ENCODE measurements at regions of chr2 and their contacts with region 1.

Region 1: GRCh38 chr2:237943395-237944094 is 23.3 kb upstream of the UBE2F start:
- DNase-seq: no peak
- H3K4me3 ChIP-seq: no peak overlapping the region
- H3K4me3 Mint-ChIP-seq: peak overlapping the region in 5 of 8 donors; percentile 20 to 82 (median 73)
- H3K27ac ChIP-seq: no peak overlapping the region
- H3K27ac Mint-ChIP-seq: peak overlapping the region in 6 of 7 donors; percentile 41 to 96 (median 91)
- H3K4me1 ChIP-seq: peaks cover 74% of the 10 kb centered on the region
- H3K4me1 Mint-ChIP-seq: peaks cover 51 to 85% (median 69%) of the 10 kb centered on the region in 4 donors
- H3K27me3 ChIP-seq: no peaks in the 10 kb centered on the region
- H3K27me3 Mint-ChIP-seq: no peaks in the 10 kb centered on the region

Region 2: GRCh38 chr2:237911363-237912017 is 32.1 kb before region 1 on chr2:
- CTCF ChIA-PET with region 1: no interaction called
- POLR2A ChIA-PET with region 1: no interaction called
- intact Hi-C with region 1: no loop called
- DNase-seq: no peak
- H3K4me3 ChIP-seq: no peak overlapping the region
- H3K4me3 Mint-ChIP-seq: no peak overlapping the region
- H3K27ac ChIP-seq: no peak overlapping the region
- H3K27ac Mint-ChIP-seq: no peak overlapping the region
- H3K4me1 ChIP-seq: no peaks in the 10 kb centered on the region
- H3K4me1 Mint-ChIP-seq: peaks cover 0 to 5% (median 3%) of the 10 kb centered on the region in 4 donors
- H3K27me3 ChIP-seq: no peaks in the 10 kb centered on the region
- H3K27me3 Mint-ChIP-seq: no peaks in the 10 kb centered on the region

Region 3: GRCh38 chr2:237923481-237924163 is 19.9 kb before region 1 on chr2:
- CTCF ChIA-PET with region 1: interaction called, 14 read pairs
- POLR2A ChIA-PET with region 1: interaction called, 8 read pairs
- intact Hi-C with region 1: no loop called
- DNase-seq: peak; percentile 63 to 77 (median 75)
- H3K4me3 ChIP-seq: peak overlapping the region in 1 of 2 donors; percentile 35
- H3K4me3 Mint-ChIP-seq: peak overlapping the region; percentile 57 to 83 (median 66)
- H3K27ac ChIP-seq: no peak overlapping the region
- H3K27ac Mint-ChIP-seq: peak overlapping the region in 4 of 7 donors; percentile 7 to 65 (median 58)
- H3K4me1 ChIP-seq: peaks cover 16% of the 10 kb centered on the region
- H3K4me1 Mint-ChIP-seq: peaks cover 17 to 30% (median 22%) of the 10 kb centered on the region in 4 donors
- H3K27me3 ChIP-seq: no peaks in the 10 kb centered on the region
- H3K27me3 Mint-ChIP-seq: no peaks in the 10 kb centered on the region

Region 4: GRCh38 chr2:237955640-237956401 is 12.3 kb after region 1 on chr2:
- CTCF ChIA-PET with region 1: interaction called, 3 read pairs
- POLR2A ChIA-PET with region 1: interaction called, 3 read pairs
- intact Hi-C with region 1: loop called (anchors 2 kb)
- DNase-seq: no peak
- H3K4me3 ChIP-seq: no peak overlapping the region
- H3K4me3 Mint-ChIP-seq: no peak overlapping the region
- H3K27ac ChIP-seq: no peak overlapping the region
- H3K27ac Mint-ChIP-seq: no peak overlapping the region
- H3K4me1 ChIP-seq: no peaks in the 10 kb centered on the region
- H3K4me1 Mint-ChIP-seq: peaks cover 9 to 24% (median 13%) of the 10 kb centered on the region in 4 donors
- H3K27me3 ChIP-seq: no peaks in the 10 kb centered on the region
- H3K27me3 Mint-ChIP-seq: peaks cover 4 to 8% of the 10 kb centered on the region in 2 donors

Region 5: GRCh38 chr2:238117191-238118154 is 173.9 kb after region 1 on chr2:
- CTCF ChIA-PET with region 1: no interaction called
- POLR2A ChIA-PET with region 1: no interaction called
- intact Hi-C with region 1: no loop called
- DNase-seq: peak in 1 of 5 donors; percentile 9
- H3K4me3 ChIP-seq: no peak overlapping the region
- H3K4me3 Mint-ChIP-seq: no peak overlapping the region
- H3K27ac ChIP-seq: no peak overlapping the region
- H3K27ac Mint-ChIP-seq: peak overlapping the region in 2 of 7 donors; percentile 30 to 55
- H3K4me1 ChIP-seq: no peaks in the 10 kb centered on the region
- H3K4me1 Mint-ChIP-seq: no peaks in the 10 kb centered on the region
- H3K27me3 ChIP-seq: no peaks in the 10 kb centered on the region
- H3K27me3 Mint-ChIP-seq: peaks cover 0 to 7% of the 10 kb centered on the region in 2 donors

Measured in CD4-positive, alpha-beta memory T cell (primary cell).